ENCODE measurements at regions of chr10 and their contacts with region 1.

Region 1: DNA sequence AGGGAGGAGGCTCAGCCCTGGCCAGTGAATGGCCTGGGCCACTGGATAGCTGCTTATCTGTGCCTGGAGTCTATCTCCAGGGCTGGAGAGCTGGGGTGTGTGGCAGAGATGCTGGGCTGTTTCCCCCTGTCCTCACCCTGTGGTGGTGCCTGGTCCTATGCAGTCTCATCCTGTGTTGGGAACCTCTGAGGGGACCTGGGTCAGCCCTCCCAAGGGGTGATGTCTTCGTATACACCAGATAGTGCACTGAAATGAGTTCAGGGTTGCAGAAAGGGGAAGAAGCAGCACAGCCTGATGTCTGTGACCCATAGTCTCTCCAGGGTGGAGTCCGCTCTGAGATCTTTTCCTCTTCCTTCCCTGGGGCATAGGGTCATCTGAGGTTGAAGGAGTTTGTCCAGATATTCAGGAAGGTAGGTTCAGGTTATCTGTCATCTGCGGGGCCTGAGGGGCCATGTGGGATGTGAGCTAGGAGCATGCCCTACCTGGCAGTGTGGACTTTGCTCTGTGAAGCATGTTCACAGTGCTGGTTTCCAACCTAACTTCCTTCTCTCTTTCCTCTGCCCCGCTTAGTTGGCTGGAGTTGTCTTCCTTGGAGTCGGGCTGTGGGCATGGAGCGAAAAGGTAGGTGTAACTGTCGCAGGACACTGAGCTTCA is 33.4 kb upstream of the SH2D4B start:
- DNase-seq: no peak
- CTCF ChIP-seq: no peak

Region 2: DNA sequence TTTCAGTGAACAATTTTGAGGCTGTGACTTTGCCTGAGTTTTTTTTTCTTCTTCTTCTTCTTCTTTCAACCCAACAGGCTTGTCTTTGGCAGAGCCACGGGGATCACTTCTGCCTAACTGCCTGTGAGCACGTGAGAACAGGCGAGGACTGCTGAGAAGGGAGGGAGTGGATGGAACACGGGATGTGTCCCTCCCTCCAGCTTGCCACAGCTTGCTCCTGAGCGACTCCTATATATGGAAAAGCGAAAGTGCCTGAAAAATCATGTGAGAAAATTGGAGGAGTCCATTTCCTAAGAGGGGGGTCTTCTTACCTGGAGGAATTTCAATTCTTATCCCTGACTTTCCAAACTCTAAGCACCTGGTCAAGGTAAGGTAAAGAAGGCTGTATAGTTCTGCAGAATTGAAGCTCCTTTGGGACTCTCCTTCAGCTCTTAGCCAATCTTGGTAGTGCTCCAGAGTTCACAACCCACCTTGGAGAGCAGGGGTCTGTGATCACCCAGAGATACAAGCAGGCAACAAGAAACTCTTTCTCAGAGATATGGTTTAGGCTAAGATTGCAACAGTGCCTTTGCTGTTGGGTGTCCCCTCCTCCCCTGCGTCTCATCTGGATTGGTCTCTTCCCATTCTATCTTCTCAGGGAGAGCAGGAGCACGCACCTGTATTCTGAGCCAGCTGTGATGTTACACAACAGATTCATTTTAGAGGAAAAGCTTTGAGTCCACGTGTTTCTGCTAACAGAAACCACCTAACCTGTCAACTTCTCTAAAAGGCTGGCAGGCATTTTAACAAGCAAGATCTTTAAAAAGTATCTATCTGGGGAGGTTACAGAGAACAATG is 214.6 kb before region 1 on chr10 and contains the start of gene MAT1A:
- CTCF ChIA-PET with region 1: no interaction called
- POLR2A ChIA-PET with region 1: no interaction called
- DNase-seq: no peak
- CTCF ChIP-seq: no peak

Region 3: GRCh38 chr10:80382989-80383388 is 121.3 kb before region 1 on chr10:
- CTCF ChIA-PET with region 1: interaction called, 57 read pairs
- POLR2A ChIA-PET with region 1: no interaction called
- DNase-seq: peak; percentile 58
- CTCF ChIP-seq: peak; percentile 60

Region 4: DNA sequence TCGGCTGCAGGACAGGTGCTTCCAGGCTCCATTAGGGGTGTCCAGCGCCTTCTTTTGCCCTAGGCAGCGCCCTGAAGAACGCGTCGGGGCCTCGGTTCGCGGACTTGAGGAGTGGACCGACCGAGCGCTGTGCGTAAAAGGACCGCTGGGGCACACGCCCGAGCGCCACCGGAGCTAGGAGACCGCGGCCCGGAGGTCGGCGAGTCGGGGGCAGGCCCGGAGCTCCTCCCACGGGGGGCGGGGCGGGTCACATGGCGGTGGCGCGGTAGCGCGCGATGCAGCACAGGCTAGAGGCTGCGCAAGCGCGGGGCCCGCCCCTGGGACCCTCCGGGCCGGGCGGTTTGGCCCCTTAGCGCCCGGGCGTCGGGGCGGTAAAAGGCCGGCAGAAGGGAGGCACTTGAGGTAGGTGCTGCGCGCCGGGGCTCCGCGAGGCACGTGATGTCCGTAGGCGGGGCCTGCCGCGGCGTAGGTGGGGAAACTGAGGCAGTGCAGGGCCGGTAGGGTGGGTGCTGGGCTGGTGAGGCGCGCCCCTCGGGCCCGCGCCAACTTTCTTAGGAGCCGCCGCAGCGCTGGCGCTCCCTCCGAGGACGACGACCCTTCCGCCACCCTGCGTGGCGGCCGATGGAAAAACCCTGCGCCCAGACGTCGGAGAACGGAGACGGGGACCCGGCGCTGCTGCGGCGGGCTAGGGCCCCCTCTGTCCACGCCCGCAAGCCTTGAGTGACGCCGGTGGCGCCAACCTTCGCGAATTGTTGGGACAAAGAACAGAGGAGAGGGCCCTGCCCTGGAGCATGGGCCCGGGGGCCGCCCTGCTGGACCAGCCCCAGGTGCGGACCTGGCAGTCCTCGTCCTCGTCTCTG is 95.8 kb before region 1 on chr10 and contains the start of gene PRXL2A:
- CTCF ChIA-PET with region 1: interaction called, 22 read pairs
- POLR2A ChIA-PET with region 1: interaction called, 4 read pairs
- DNase-seq: peak; percentile 96
- CTCF ChIP-seq: peak; percentile 0

Region 5: DNA sequence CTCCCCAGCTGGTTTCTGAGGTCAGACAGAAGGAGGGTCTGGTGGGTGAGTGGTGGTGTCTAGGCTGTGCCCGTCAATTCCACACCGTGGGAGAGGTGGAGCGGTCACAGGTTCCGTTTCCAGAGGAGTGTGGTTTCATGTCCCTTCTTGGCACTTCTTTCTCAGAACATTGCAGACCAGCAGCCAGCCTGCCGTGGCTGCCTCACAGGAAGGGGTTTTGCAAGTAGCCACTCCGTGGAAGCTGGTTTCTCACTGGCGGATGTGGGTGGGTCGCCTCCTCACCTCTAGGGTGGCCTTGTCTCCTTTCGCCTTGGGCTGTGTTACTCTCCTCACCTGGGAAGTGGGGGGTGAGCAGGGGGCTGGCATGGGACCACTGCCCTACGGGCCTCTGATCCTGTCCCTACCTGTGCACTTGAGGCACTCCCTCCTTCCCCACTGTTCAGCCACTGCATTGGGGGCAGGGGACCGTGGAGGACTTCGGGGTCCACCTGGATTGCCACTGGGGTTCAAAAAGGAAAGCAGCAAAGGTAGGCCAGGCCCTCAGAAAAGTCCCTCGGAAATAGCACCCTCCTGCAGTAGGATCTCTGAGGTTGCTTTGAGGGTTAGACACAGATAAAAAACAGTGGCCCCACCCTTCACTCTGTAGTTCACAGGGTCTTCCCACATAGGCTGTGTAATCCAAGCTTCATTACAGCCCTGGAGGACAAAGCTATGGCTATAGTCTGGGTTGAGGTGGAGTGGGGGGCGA is 16.3 kb before region 1 on chr10:
- CTCF ChIA-PET with region 1: interaction called, 42 read pairs
- POLR2A ChIA-PET with region 1: no interaction called
- DNase-seq: no peak
- CTCF ChIP-seq: no peak

Region 6: DNA sequence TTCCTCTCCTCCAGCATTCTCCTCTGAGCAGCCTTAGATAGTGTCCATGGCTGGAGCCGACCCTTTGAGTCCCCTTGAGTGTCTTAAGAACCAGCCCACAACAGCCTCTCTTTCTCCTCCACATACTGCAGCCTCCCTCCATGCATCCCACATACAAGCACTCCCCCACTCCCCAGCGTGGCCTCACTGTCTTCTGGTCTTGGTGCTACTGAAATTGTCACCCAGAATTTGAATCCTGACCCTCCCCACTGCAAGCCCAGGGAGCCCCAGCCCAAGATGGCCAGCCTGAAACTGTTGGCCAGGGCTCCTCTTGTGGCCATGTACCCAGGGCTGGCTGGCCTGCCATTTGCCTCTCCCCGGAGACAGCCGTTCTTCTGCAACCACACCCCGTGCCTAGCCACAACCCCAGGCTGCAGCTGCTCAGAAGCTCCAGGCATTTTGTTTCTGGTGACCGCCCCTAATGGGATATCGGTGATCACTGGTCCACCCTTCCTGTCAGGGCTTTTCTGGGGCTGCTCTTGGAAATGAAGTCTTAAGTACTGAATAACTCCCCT is 14.6 kb after region 1 on chr10:
- CTCF ChIA-PET with region 1: interaction called, 39 read pairs
- POLR2A ChIA-PET with region 1: no interaction called
- DNase-seq: no peak
- CTCF ChIP-seq: no peak

Region 7: DNA sequence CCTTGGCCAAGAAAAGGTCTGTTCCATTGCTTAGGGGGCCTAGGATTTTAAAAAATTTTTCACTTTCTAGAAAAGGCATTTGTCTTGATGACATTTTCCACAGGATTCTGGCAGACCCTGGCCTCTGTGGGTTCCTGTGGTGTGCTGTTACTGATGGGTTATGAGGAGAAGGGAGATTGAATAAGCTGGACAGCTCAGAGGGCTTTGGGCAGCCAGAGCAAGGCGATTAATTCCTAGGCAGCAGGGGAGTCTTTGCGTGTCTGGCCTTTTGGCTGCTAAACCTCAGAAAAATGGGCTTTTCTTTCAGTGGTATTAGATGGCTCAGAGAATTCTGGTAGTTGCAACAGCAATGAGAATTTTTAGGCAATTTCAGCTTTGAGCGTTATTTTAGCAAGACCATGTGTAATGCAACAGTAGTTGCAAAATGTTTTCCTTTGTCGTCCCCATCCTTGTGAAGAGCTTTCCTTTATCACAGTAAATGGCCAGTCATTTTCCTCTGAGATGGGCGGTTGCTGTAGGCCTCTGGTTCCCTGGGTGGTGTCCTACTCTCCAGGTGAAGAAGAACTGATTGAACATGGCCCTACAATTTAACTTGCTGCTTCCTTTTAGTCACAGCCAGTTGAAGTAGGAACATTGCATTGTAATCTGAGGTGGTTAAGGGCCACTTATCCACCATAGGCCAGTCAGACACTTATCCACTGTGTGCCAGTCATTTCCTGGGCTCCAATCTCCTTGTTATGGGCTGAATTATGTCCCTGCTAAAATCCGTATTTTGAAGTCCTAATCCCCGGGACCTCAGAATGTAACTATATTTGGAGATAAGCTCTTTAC is 76.6 kb after region 1 on chr10:
- CTCF ChIA-PET with region 1: no interaction called
- POLR2A ChIA-PET with region 1: no interaction called
- DNase-seq: no peak
- CTCF ChIP-seq: no peak